Activated B cell treated with CpG ODN at 0.5 μM for 24 hours (primary cell): ENCODE measurements at regions of chr9 and their contacts with region 1.

Region 1: DNA sequence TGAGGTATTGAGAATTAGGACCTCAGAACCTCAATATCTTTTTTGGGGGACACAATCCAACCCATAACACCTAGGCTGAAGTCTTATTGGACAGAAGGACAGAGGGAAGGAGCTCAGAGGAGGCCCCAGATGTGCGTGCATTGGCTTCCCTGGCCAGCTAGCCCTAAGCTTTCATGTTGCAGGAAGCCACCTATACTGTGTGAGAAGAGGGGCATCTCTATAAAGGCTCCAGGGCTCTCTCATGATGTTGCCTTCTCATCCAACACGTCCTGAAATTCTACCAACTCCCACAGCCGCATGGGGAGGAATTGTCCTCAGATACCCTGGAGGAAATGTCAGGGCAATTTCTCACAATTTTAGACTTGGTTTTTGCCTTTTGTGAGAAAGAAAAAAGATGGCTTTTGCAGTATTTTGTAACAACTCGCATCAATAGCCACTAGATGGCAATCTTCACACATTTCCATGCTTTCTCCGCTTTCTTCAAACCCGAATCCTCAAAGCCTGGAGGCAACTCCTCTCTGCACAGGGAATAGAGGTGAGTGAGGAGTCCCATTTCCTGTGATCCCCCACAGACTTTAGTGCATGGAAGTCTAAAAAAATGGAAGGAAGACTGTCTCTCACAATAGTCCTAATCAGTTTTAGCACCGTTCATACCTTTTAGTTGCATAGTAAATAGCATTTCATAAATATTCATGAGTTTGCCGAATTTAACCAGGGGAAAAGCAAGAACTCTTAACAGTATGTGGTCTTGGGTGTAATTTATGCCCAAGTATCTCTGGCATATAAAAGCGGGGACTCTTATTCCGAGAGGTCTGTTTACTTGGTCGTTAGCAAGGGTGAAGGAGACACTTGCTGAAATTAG is 7.4 kb upstream of the PPP3R2 start:
- DNase-seq: no peak
- ATAC-seq: no peak
- H3K4me3 Mint-ChIP-seq: no peak overlapping the region
- H3K27ac Mint-ChIP-seq: no peak overlapping the region
- H3K4me1 Mint-ChIP-seq: peaks cover 4% of the 10 kb centered on the region
- H3K27me3 Mint-ChIP-seq: peaks cover 20% of the 10 kb centered on the region
- CTCF ChIP-seq: no peak

Region 2: DNA sequence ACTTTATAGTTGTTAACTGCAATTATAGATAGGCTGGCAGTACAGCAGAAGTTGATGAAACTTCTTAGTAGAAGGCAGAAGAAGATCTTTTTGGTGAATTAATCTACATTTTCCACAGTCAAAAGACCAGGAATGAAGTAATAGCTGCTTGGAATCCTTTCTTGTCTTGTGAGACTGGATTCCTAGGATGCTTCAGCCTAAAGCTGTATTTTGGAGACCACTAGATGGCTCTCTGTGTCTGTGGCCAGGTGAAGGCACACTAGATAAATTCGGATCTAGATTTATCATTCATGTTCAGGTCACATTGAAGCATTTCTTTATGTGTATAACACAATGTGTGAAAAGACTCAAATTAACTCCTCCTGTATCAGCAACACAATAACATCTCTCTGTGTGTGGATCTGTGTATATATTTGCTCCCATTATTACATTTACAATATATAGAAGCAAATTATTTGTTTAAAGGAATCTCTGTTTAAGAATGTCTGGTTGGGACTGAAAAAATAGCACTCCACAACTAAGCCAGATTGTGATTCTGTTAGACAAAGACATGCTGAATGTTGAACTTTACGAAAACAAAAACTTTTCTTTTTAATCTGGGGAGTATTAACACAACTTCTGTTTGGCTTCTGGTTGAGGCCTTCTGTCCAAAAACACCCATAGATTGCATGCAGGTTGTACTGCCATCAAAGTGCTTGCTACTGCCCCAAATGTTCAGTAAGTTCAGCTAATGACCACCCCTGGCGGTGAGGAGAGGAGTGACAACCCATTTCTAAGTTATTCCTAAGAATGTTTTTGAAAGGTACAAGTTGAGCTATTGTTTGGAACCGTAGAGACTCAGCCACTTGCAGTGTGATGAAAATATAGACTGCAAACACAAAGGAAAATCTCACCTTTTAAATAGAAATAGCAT is 125.7 kb after region 1 on chr9:
- CTCF ChIA-PET with region 1: no interaction called
- POLR2A ChIA-PET with region 1: no interaction called
- intact Hi-C with region 1: loop called (anchors 5 kb)
- DNase-seq: no peak
- ATAC-seq: no peak
- H3K4me3 Mint-ChIP-seq: no peak overlapping the region
- H3K27ac Mint-ChIP-seq: no peak overlapping the region
- H3K4me1 Mint-ChIP-seq: no peaks in the 10 kb centered on the region
- H3K27me3 Mint-ChIP-seq: no peaks in the 10 kb centered on the region
- CTCF ChIP-seq: no peak